Psoas muscle (tissue), 8 donors: ENCODE measurements at regions of chr1 and their contacts with region 1.

Region 1: DNA sequence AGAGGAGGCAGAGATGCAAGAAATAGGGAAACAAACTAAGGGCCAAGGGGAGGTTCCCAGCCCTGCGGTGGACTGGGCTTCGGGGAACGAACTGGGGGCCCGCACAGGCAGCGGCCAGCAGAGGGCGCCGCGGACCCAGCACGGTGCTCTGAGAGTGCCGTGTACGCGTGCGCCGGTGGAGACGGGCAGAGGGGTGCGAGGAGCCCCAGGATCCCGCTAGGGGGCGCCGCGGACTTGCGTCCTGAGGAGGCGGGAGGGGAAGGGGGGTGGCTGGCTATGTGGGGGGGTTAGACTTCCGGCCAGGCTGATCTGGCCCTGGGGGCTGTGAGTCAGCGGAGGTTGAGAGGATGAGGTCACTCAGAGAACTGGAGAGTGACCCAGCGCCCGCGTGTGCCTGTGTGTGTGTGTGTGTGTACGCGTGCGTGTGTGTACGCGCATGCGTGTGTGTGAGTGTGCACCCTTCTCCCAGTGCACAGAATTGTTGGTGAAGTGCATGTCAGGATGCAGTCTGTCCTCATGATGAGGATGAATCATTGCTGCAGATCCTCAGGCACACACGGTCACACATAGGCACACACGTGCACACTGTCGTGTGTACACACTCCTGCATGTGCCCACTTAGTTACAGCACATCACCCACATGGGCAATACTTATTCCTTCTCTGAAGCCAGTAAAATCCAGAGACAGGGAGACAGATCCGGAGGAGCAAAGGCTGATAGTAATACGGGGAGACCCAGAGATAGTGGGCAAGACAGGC is 17.0 kb downstream of the NES start:
- DNase-seq: peak; percentile 98 to 99
- ATAC-seq: peak; percentile 78 to 84 (median 81)
- H3K4me3 ChIP-seq: peak overlapping the region; percentile 56
- H3K27ac ChIP-seq: peak overlapping the region; percentile 99
- H3K4me1 ChIP-seq: peaks cover 67% of the 10 kb centered on the region
- H3K27me3 ChIP-seq: peaks cover 0 to 14% (median 2%) of the 10 kb centered on the region in 3 donors
- CTCF ChIP-seq: peak; percentile 96

Region 2: DNA sequence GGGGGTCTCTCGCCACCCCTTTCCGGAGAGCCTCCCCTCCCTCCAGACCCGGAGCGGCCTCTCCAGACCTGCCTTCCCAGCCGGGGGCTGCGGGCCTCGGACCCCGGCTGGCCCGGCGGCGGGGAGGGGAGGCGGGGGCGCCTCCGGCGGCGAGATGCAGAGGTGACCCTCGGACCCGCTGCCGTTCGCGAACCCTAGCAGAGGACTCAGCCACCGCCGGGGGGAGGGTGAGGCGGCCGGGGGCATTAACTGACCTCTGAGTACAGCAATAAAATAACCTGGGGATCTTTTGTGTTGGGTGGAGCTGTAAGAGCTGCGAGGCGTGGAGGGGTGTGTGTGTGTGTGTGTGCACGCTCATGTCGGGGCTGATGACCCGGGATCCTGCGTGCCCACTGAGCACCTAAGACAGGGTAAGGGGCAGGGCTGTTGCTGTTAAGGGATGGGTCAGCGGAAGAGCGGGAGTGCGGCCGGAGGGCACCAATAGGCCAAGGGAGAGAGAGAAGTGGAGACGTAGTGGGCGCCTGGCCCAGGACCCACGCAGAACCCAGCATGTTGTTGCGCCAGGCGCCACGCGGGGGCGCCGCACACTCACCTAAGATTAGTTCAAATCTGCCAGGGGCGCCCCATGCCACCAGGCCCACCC is 34.6 kb before region 1 on chr1:
- intact Hi-C with region 1: loop called (anchors 1 to 2 kb)
- DNase-seq: peak; percentile 62 to 83
- ATAC-seq: peak; percentile 69 to 85 (median 78)
- H3K4me3 ChIP-seq: peak overlapping the region; percentile 60
- H3K27ac ChIP-seq: no peak overlapping the region
- H3K4me1 ChIP-seq: peaks cover 13% of the 10 kb centered on the region
- H3K27me3 ChIP-seq: peaks cover 0 to 54% (median 16%) of the 10 kb centered on the region in 3 donors
- CTCF ChIP-seq: peak; percentile 87

Region 3: GRCh38 chr1:156677616-156678596 is 17.7 kb after region 1 on chr1:
- intact Hi-C with region 1: loop called (anchors 1 kb)
- DNase-seq: peak; percentile 78 to 87
- ATAC-seq: peak; percentile 71 to 90 (median 76)
- H3K4me3 ChIP-seq: peak overlapping the region; percentile 74
- H3K27ac ChIP-seq: peak overlapping the region; percentile 80
- H3K4me1 ChIP-seq: peaks cover 37% of the 10 kb centered on the region
- H3K27me3 ChIP-seq: peaks cover 0 to 9% (median 2%) of the 10 kb centered on the region in 3 donors
- CTCF ChIP-seq: peak; percentile 90

Region 4: GRCh38 chr1:156705918-156706656 is 45.9 kb after region 1 on chr1:
- intact Hi-C with region 1: no loop called
- DNase-seq: peak; percentile 68 to 76
- ATAC-seq: peak; percentile 50 to 75 (median 60)
- H3K4me3 ChIP-seq: peak overlapping the region; percentile 62
- H3K27ac ChIP-seq: no peak overlapping the region
- H3K4me1 ChIP-seq: peaks cover 22% of the 10 kb centered on the region
- H3K27me3 ChIP-seq: peaks cover 0 to 51% (median 16%) of the 10 kb centered on the region in 3 donors
- CTCF ChIP-seq: peak; percentile 71

Region 5: GRCh38 chr1:156728597-156729462 is 68.7 kb after region 1 on chr1 and contains the start of gene ISG20L2:
- intact Hi-C with region 1: loop called in 1 of 2 experiments (anchors 2 kb)
- DNase-seq: peak; percentile 97 to 99
- ATAC-seq: peak; percentile 92 to 94 (median 94)
- H3K4me3 ChIP-seq: peak within 1 kb of the TSS; percentile 80
- H3K27ac ChIP-seq: peak within 1 kb of the TSS; percentile 99
- H3K4me1 ChIP-seq: peaks cover 45% of the 10 kb centered on the region
- H3K27me3 ChIP-seq: no peaks in the 10 kb centered on the region
- CTCF ChIP-seq: no peak
- total RNA-seq, gene ISG20L2: 7.4 to 19.8 (median 16.5) TPM